ENCODE measurements at regions of chr3 and their contacts with region 1.

Region 1: DNA sequence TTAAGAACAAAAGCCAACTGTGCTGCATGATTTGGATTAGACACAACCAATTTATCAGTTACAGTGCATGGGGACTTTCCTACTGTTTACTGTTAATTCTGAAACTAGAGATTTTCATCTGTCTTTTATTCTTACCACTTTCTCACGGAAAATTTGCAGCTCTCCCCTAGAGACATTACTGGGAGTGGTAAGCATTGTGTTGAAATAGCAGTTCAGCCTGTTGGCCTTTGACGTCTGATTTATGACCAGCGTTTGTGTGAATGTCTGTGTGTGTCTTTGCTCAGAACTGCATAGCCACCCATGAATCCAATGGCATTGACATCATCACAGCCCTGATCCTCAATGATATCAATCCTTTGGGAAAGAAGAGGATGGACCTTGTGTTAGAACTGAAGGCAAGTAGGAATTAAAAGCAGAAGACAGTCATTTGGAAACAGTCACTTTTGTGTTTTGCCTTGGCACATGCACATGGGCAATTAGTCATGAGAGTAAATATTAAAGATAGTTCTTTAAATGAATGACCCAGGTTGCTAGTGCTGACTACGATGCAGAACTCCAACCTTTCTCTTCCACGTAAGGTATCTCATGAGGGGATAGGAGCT is 202.2 kb upstream of the BHLHE40 start:
- DNase-seq: peak; percentile 8
- H3K4me3 Mint-ChIP-seq: no peak overlapping the region
- H3K27ac Mint-ChIP-seq: peak overlapping the region; percentile 60
- H3K4me1 Mint-ChIP-seq: peaks cover 71% of the 10 kb centered on the region
- H3K27me3 Mint-ChIP-seq: no peaks in the 10 kb centered on the region

Region 2: DNA sequence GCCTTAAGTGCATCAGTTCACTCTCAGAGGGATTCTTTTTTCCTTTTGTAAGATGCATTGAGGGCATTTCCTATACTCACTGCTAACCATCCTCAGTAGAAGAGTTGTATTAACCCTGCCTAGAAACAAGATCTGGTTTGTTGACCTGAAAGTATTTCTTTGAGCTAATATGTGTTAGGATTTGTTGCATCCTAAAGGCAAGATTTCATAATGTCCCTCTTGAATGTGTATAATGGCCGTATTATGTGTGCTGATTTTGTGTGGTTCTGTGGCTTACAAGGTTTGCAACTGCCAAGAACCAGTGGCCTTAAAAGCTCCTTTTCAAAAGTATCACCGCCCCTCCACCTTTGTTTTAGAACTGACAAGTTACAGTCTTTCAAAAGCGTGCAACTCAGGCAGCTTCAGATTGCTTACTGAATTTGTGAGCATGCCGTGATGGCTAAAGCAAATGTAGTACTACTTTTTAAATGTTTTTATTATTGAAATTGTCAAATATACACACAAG is 20.2 kb after region 1 on chr3:
- CTCF ChIA-PET with region 1: interaction called, 17 read pairs
- POLR2A ChIA-PET with region 1: no interaction called
- DNase-seq: no peak
- H3K4me3 Mint-ChIP-seq: no peak overlapping the region
- H3K27ac Mint-ChIP-seq: no peak overlapping the region
- H3K4me1 Mint-ChIP-seq: peaks cover 1% of the 10 kb centered on the region
- H3K27me3 Mint-ChIP-seq: no peaks in the 10 kb centered on the region